ENCODE measurements at regions of chr4 and their contacts with region 1.

Region 1: GRCh38 chr4:37977471-37978247 is 17.5 kb downstream of the PTTG2 start:
- DNase-seq: peak; percentile 70
- H3K4me3 Mint-ChIP-seq: peak overlapping the region; percentile 86
- H3K27ac Mint-ChIP-seq: peak overlapping the region; percentile 81
- H3K4me1 Mint-ChIP-seq: peaks cover 41% of the 10 kb centered on the region
- H3K27me3 Mint-ChIP-seq: no peaks in the 10 kb centered on the region

Region 2: DNA sequence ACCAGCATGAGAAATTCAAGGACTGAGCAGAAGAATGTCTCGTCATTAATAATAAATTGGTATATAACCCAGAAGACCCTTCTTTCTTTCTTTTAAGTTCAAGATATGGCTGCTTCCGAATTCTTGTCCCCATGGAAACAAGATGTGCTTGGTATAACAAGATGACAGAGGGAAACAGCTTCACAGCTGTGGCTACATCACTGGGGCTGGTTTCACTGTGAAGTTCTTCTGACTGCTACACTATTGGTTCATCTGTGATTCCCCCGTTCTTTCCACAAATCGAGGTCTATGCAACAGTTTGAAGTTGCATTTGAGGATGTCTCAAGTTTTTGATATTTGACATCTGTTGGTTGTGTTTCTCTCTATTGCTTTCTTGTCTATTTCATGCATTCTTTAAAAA is 1708.6 kb before region 1 on chr4:
- intact Hi-C with region 1: loop called (anchors 10 kb)
- DNase-seq: peak; percentile 59
- H3K4me3 Mint-ChIP-seq: no peak overlapping the region
- H3K27ac Mint-ChIP-seq: peak overlapping the region; percentile 75
- H3K4me1 Mint-ChIP-seq: peaks cover 56% of the 10 kb centered on the region
- H3K27me3 Mint-ChIP-seq: no peaks in the 10 kb centered on the region

Region 3: GRCh38 chr4:37603070-37603468 is 374.6 kb before region 1 on chr4:
- intact Hi-C with region 1: loop called (anchors 5 kb)
- DNase-seq: peak; percentile 59
- H3K4me3 Mint-ChIP-seq: no peak overlapping the region
- H3K27ac Mint-ChIP-seq: no peak overlapping the region
- H3K4me1 Mint-ChIP-seq: peaks cover 33% of the 10 kb centered on the region
- H3K27me3 Mint-ChIP-seq: no peaks in the 10 kb centered on the region

Region 4: GRCh38 chr4:37802068-37802666 is 175.5 kb before region 1 on chr4:
- intact Hi-C with region 1: loop called (anchors 1 kb)
- DNase-seq: no peak
- H3K4me3 Mint-ChIP-seq: no peak overlapping the region
- H3K27ac Mint-ChIP-seq: no peak overlapping the region
- H3K4me1 Mint-ChIP-seq: no peaks in the 10 kb centered on the region
- H3K27me3 Mint-ChIP-seq: peaks cover 6% of the 10 kb centered on the region

Region 5: DNA sequence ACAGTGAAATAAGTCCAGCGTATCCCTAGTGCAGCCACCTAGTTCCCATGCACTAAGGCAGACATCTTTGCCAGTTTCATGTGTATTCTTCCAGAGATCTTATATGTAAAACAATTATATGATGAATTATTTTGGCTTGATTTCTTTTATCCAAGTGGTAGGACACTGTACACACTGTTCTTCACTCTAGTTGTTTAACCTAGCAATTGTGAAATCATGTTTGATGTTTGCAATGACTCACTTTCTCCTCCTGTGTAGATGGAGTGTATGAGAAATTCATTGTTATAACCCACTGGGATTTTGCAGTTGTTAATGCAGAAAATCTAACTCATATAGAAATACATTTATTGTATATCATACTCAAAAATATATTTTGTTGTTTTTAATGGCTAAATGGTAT is 104.3 kb before region 1 on chr4:
- intact Hi-C with region 1: loop called (anchors 5 kb)
- DNase-seq: no peak
- H3K4me3 Mint-ChIP-seq: no peak overlapping the region
- H3K27ac Mint-ChIP-seq: no peak overlapping the region
- H3K4me1 Mint-ChIP-seq: peaks cover 21% of the 10 kb centered on the region
- H3K27me3 Mint-ChIP-seq: no peaks in the 10 kb centered on the region

Measured in activated T-helper 1 cell treated with anti-CD3 and anti-CD28 coated beads, Interleukin-12 subunit alpha, Interleukin-12 subunit beta, Interleukin-2, Interleukin-4 antibody, amounts not matched to agents 30 ng/mL and 10 ng/mL and 1 ng/mL, durations not matched to agents 14 hours and 24 hours and 36 hours (primary cell).